GM12878 (cell line): ENCODE measurements at regions of chr3 and their contacts with region 1.

Region 1: DNA sequence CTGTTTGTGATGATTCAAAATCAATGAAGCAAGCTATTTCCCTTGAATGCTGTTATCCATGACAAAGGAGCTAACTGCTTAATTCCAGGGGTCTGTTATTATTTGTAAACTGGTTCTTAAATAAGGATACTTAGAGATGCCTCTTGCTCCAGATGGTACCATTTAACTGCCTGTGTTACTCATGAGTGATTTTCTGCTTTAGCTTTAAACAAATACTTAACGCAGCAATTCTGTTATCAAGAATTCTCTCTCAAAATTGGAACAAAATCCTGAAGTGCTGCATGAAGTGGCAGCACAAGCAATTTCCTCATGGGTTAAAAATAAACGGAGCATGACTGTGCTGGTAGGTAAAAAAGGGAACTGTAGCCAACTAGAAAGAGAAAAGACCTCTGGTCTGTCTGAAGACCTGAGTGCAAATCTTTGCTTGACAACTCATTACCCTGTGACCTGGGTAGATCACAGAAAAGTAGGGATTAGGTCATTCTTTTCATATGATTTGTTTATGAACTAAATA is 62.5 kb upstream of the GBE1 start:
- DNase-seq: peak; percentile 59
- ATAC-seq: peak; percentile 99
- H3K4me3 ChIP-seq: no peak overlapping the region
- H3K27ac ChIP-seq: peak overlapping the region; percentile 53
- H3K4me1 ChIP-seq: peaks cover 10% of the 10 kb centered on the region; the same call in 1 of the 2 replicates
- H3K27me3 ChIP-seq: no peaks in the 10 kb centered on the region
- CTCF ChIP-seq: no peak
- EP300 ChIP-seq: 0 out of 4 replicates have a peak, but pooled peaks of 1 of the 2 experiments have one; percentile 29
- POLR2A ChIP-seq: no peak
- RAD21 ChIP-seq: no peak

Region 2: GRCh38 chr3:81788610-81789009 is 35.3 kb before region 1 on chr3:
- CTCF ChIA-PET with region 1: interaction called, 3 read pairs
- POLR2A ChIA-PET with region 1: no interaction called
- RAD21 ChIA-PET with region 1: interaction called, 4 read pairs
- SMC1A ChIA-PET with region 1: interaction called, 14 read pairs
- in situ Hi-C with region 1: no loop called
- intact Hi-C with region 1: loop called (anchors 2 kb)
- DNase-seq: peak; percentile 58
- ATAC-seq: peak; percentile 88
- H3K4me3 ChIP-seq: no peak overlapping the region
- H3K27ac ChIP-seq: peak overlapping the region; percentile 69
- H3K4me1 ChIP-seq: peaks cover 16% of the 10 kb centered on the region
- H3K27me3 ChIP-seq: no peaks in the 10 kb centered on the region
- CTCF ChIP-seq: no peak
- EP300 ChIP-seq: peak in 1 of 2 experiments; percentile 31; a peak in 1 of 4 replicates
- POLR2A ChIP-seq: no peak
- RAD21 ChIP-seq: no peak

Region 3: DNA sequence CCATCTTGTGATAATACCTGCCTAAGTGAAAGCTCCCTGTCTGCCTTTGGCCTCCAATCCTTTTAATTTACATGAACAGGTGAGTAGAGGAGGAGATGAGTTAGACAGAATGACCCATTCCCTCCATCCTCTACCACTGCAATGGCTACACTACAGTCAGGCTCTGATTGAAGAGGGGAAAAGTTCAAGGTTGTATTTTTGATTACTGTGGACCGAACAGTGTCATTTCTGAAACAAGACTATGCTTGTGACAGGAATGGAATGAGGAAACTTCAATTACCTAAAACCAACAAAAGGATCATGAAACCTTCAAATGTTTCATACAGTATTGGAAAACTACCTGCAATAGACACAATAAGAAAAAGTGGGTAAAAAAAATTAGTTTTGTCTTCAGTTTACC is 23.0 kb after region 1 on chr3:
- CTCF ChIA-PET with region 1: no interaction called
- POLR2A ChIA-PET with region 1: no interaction called
- RAD21 ChIA-PET with region 1: no interaction called
- SMC1A ChIA-PET with region 1: no interaction called
- in situ Hi-C with region 1: no loop called
- intact Hi-C with region 1: no loop called
- DNase-seq: no peak
- ATAC-seq: no peak
- H3K4me3 ChIP-seq: no peak overlapping the region
- H3K27ac ChIP-seq: no peak overlapping the region
- H3K4me1 ChIP-seq: no peaks in the 10 kb centered on the region
- H3K27me3 ChIP-seq: no peaks in the 10 kb centered on the region
- CTCF ChIP-seq: no peak
- EP300 ChIP-seq: no peak
- POLR2A ChIP-seq: no peak
- RAD21 ChIP-seq: no peak

Region 4: GRCh38 chr3:82055792-82056191 is 231.9 kb after region 1 on chr3:
- CTCF ChIA-PET with region 1: no interaction called
- POLR2A ChIA-PET with region 1: no interaction called
- RAD21 ChIA-PET with region 1: no interaction called
- SMC1A ChIA-PET with region 1: no interaction called
- in situ Hi-C with region 1: no loop called
- intact Hi-C with region 1: no loop called
- DNase-seq: no peak
- ATAC-seq: no peak
- H3K4me3 ChIP-seq: no peak overlapping the region
- H3K27ac ChIP-seq: no peak overlapping the region
- H3K4me1 ChIP-seq: no peaks in the 10 kb centered on the region
- H3K27me3 ChIP-seq: no peaks in the 10 kb centered on the region
- CTCF ChIP-seq: no peak
- EP300 ChIP-seq: no peak
- POLR2A ChIP-seq: no peak
- RAD21 ChIP-seq: no peak